ENCODE measurements at regions of chr3 and their contacts with region 1.

Region 1: GRCh38 chr3:111859974-111860859 is 1.2 kb downstream of the PHLDB2 start:
- DNase-seq: peak; percentile 89 to 97
- H3K4me3 ChIP-seq: peak overlapping the region; percentile 65
- H3K27ac ChIP-seq: peak overlapping the region; percentile 88
- H3K4me1 ChIP-seq: peaks cover 54% of the 10 kb centered on the region
- H3K27me3 ChIP-seq: no peaks in the 10 kb centered on the region
- CTCF ChIP-seq: peak; percentile 68

Region 2: GRCh38 chr3:111676211-111677006 is 183.8 kb before region 1 on chr3:
- CTCF ChIA-PET with region 1: no interaction called
- POLR2A ChIA-PET with region 1: interaction called, 3 read pairs
- intact Hi-C with region 1: loop called (anchors 1 kb)
- DNase-seq: peak; percentile 92 to 100
- H3K4me3 ChIP-seq: peak overlapping the region; percentile 62
- H3K27ac ChIP-seq: peak overlapping the region; percentile 83
- H3K4me1 ChIP-seq: peaks cover 44% of the 10 kb centered on the region
- H3K27me3 ChIP-seq: no peaks in the 10 kb centered on the region
- CTCF ChIP-seq: no peak

Region 3: DNA sequence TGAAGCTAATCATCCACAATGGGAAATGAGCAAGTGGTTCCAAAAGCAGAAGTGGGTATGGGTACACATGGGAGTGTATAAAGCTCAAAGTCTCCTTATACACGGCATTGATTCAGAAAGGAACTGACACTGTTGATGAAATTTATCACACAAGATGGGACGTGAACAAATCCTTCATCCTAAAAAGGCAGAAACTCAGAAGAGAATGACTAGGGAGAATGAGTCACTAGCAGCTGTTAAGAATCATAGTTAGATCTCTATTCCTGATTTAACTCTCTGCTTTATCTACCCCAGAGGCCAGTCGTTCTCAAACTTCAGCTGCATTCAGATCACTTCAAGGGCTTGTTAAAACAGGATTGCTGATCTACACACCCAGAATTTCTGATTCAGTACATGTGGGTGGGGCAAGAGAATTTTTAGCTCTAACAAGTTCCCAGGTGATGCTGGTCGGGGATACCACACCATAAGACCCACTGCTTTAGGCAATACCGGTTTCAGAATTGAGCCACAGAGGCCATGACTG is 98.8 kb before region 1 on chr3:
- CTCF ChIA-PET with region 1: interaction called, 6 read pairs
- POLR2A ChIA-PET with region 1: interaction called, 8 read pairs
- intact Hi-C with region 1: loop called (anchors 1 kb)
- DNase-seq: peak; percentile 47 to 73
- H3K4me3 ChIP-seq: no peak overlapping the region
- H3K27ac ChIP-seq: peak overlapping the region; percentile 32
- H3K4me1 ChIP-seq: peaks cover 10% of the 10 kb centered on the region
- H3K27me3 ChIP-seq: no peaks in the 10 kb centered on the region
- CTCF ChIP-seq: no peak

Region 4: GRCh38 chr3:111895079-111895478 is 34.9 kb after region 1 on chr3:
- CTCF ChIA-PET with region 1: interaction called, 10 read pairs
- POLR2A ChIA-PET with region 1: interaction called, 10 read pairs
- intact Hi-C with region 1: no loop called
- DNase-seq: peak in 1 of 2 experiments; percentile 63
- H3K4me3 ChIP-seq: no peak overlapping the region
- H3K27ac ChIP-seq: peak overlapping the region; percentile 4; the same call in 1 of the 2 replicates
- H3K4me1 ChIP-seq: 0 out of 2 replicates have a peak, but pooled peaks cover 4% of the 10 kb centered on the region
- H3K27me3 ChIP-seq: no peaks in the 10 kb centered on the region
- CTCF ChIP-seq: peak; percentile 77

Region 5: DNA sequence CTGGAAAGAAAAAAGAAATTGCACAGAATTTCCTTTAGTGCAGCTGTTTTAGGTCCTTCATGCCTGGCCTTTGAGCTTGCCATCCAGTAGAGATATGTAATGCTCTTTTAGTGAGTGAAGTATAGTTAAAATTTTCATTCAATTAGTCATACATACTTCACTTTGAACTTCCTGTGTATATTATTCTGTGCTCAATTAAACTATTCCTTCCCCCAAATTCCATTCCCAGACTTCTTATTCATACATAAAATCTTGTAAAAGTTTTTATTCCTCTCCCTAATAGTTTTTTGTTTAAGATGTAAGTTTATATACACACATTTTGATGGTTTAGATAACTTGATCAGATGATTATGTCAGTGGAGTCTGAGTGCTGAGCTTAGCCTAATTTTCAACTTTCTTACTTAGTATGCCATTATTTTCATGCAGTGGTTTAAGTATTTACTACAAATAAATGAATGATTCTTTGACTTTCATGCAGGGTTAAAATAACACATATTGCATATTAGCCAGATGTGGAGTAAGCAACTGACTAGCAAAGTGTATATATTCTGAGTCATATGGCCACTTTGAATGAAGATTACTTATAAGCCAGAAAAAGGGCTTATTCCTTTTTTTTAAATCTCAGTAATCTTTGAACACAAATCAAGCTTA is 76.1 kb after region 1 on chr3:
- CTCF ChIA-PET with region 1: no interaction called
- POLR2A ChIA-PET with region 1: interaction called, 4 read pairs
- intact Hi-C with region 1: loop called (anchors 2 kb)
- DNase-seq: peak in 1 of 2 experiments; percentile 94
- H3K4me3 ChIP-seq: peak overlapping the region; percentile 2
- H3K27ac ChIP-seq: peak overlapping the region; percentile 90
- H3K4me1 ChIP-seq: peaks cover 45% of the 10 kb centered on the region
- H3K27me3 ChIP-seq: no peaks in the 10 kb centered on the region
- CTCF ChIP-seq: no peak